Vagina (tissue), 2 donors: ENCODE measurements at regions of chr2 and their contacts with region 1.

Region 1: GRCh38 chr2:23843051-23843976 is 83.6 kb downstream of the ATAD2B start:
- DNase-seq: no peak
- H3K4me3 ChIP-seq: peak overlapping the region in 1 of 2 donors; percentile 2
- H3K27ac ChIP-seq: peak overlapping the region; percentile 2
- H3K4me1 ChIP-seq: no peaks in the 10 kb centered on the region
- H3K27me3 ChIP-seq: no peaks in the 10 kb centered on the region
- CTCF ChIP-seq: no peak
- POLR2A ChIP-seq: no peak

Region 2: GRCh38 chr2:24597181-24597870 is 754.0 kb after region 1 on chr2:
- intact Hi-C with region 1: loop called (anchors 10 kb)
- DNase-seq: no peak
- H3K4me3 ChIP-seq: no peak overlapping the region
- H3K27ac ChIP-seq: no peak overlapping the region
- H3K4me1 ChIP-seq: peaks cover 8% of the 10 kb centered on the region
- H3K27me3 ChIP-seq: no peaks in the 10 kb centered on the region
- CTCF ChIP-seq: no peak
- POLR2A ChIP-seq: no peak